ENCODE measurements at regions of chr11 and their contacts with region 1.

Region 1: GRCh38 chr11:81700076-81700475 is 1033.6 kb downstream of the FAM181B start:
- DNase-seq: no peak
- ATAC-seq: no peak
- H3K4me3 ChIP-seq: no peak overlapping the region
- H3K27ac ChIP-seq: no peak overlapping the region
- H3K4me1 ChIP-seq: no peaks in the 10 kb centered on the region
- H3K27me3 ChIP-seq: no peaks in the 10 kb centered on the region
- CTCF ChIP-seq: no peak
- POLR2A ChIP-seq: no peak

Region 2: GRCh38 chr11:81772166-81772565 is 72.1 kb after region 1 on chr11:
- intact Hi-C with region 1: loop called in 1 of 10 experiments (anchors 10 kb)
- DNase-seq: no peak
- ATAC-seq: no peak
- H3K4me3 ChIP-seq: no peak overlapping the region
- H3K27ac ChIP-seq: no peak overlapping the region
- H3K4me1 ChIP-seq: no peaks in the 10 kb centered on the region
- H3K27me3 ChIP-seq: no peaks in the 10 kb centered on the region
- CTCF ChIP-seq: no peak
- POLR2A ChIP-seq: no peak

Region 3: DNA sequence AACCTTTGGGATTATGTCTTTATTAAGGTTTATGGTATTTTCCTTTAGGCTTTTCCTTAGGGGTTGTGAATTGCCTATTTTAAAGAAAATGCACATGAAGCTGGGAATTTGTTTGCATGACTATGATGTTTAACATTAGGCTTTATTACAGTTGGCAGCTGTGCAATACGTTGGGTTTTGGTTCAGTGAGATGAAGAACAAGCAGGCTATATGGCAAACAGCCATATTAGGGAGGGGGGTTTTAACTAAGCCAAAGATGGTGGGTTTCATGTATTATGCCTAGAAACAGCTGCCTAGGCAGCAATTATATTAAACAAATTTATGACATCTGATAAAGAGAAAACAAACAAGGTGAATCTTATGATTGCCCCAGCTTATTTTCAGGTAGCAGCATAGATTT is 152.8 kb after region 1 on chr11:
- intact Hi-C with region 1: no loop called
- DNase-seq: no peak
- ATAC-seq: no peak
- H3K4me3 ChIP-seq: no peak overlapping the region
- H3K27ac ChIP-seq: no peak overlapping the region
- H3K4me1 ChIP-seq: no peaks in the 10 kb centered on the region
- H3K27me3 ChIP-seq: no peaks in the 10 kb centered on the region
- CTCF ChIP-seq: no peak
- POLR2A ChIP-seq: no peak